Activated CD4-positive, alpha-beta T cell treated with anti-CD3 and anti-CD28 coated beads, Interleukin-2, amount 10 ng/mL, durations not matched to agents 24 days and 14 days (primary cell): ENCODE measurements at regions of chr4 and their contacts with region 1.

Region 1: GRCh38 chr4:113684534-113685091 is 76.9 kb downstream of the CAMK2D start:
- DNase-seq: peak; percentile 71
- H3K4me3 Mint-ChIP-seq: peak overlapping the region; percentile 69
- H3K27ac Mint-ChIP-seq: peak overlapping the region; percentile 95
- H3K4me1 Mint-ChIP-seq: peaks cover 56% of the 10 kb centered on the region
- H3K27me3 Mint-ChIP-seq: no peaks in the 10 kb centered on the region

Region 2: GRCh38 chr4:113355550-113356371 is 328.9 kb before region 1 on chr4:
- intact Hi-C with region 1: loop called (anchors 5 kb)
- DNase-seq: peak; percentile 90
- H3K4me3 Mint-ChIP-seq: peak overlapping the region; percentile 54
- H3K27ac Mint-ChIP-seq: peak overlapping the region; percentile 89
- H3K4me1 Mint-ChIP-seq: peaks cover 20% of the 10 kb centered on the region
- H3K27me3 Mint-ChIP-seq: peaks cover 42% of the 10 kb centered on the region

Region 3: DNA sequence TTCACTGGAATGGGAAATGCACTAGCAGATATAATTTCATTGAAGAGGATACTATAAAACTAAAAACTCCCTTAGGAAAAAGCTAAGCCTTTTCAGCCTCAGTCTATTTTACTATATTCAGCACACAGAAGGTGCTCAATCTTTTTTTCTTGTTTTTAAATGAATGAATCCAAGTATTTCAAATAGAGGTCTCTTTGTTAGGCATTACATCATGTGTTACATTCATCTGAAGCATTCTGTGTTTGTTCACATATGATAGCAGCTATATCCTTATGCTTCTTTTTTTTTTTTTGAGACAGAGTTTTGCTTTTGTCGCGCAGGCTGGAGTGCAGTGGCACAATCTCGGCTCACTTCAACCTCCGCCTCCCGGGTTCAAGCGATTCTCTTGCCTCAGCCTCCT is 201.5 kb before region 1 on chr4:
- intact Hi-C with region 1: no loop called
- DNase-seq: no peak
- H3K4me3 Mint-ChIP-seq: no peak overlapping the region
- H3K27ac Mint-ChIP-seq: no peak overlapping the region
- H3K4me1 Mint-ChIP-seq: no peaks in the 10 kb centered on the region
- H3K27me3 Mint-ChIP-seq: no peaks in the 10 kb centered on the region

Region 4: DNA sequence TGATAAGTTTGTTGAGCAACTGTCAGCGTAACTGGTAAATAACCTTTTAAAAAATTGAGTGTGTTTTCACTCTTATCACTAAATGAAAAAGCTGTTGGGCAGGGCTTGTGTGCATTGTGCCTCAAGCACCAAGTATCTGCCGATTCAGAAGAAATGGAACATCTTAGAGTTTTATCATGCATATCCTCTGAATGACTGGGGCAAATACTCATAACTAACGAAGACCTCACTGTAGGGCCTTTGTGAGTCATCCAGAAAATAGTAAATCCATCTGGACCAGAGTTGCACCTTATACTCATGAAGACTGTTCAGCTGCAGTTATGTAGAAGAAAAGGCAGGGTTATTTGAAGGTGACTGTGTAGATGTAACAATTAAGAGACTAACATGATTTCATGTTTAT is 145.2 kb before region 1 on chr4:
- intact Hi-C with region 1: loop called (anchors 1 kb)
- DNase-seq: no peak
- H3K4me3 Mint-ChIP-seq: peak overlapping the region; percentile 9
- H3K27ac Mint-ChIP-seq: peak overlapping the region; percentile 79
- H3K4me1 Mint-ChIP-seq: peaks cover 30% of the 10 kb centered on the region
- H3K27me3 Mint-ChIP-seq: no peaks in the 10 kb centered on the region

Region 5: GRCh38 chr4:113636438-113636818 is 48.2 kb before region 1 on chr4:
- intact Hi-C with region 1: loop called (anchors 1 kb)
- DNase-seq: peak; percentile 71
- H3K4me3 Mint-ChIP-seq: peak overlapping the region; percentile 69
- H3K27ac Mint-ChIP-seq: peak overlapping the region; percentile 73
- H3K4me1 Mint-ChIP-seq: peaks cover 48% of the 10 kb centered on the region
- H3K27me3 Mint-ChIP-seq: no peaks in the 10 kb centered on the region

Region 6: GRCh38 chr4:113756005-113756410 is 71.4 kb after region 1 on chr4:
- intact Hi-C with region 1: loop called (anchors 1 kb)
- DNase-seq: no peak
- H3K4me3 Mint-ChIP-seq: peak overlapping the region; percentile 68
- H3K27ac Mint-ChIP-seq: peak overlapping the region; percentile 80
- H3K4me1 Mint-ChIP-seq: peaks cover 43% of the 10 kb centered on the region
- H3K27me3 Mint-ChIP-seq: no peaks in the 10 kb centered on the region

Region 7: DNA sequence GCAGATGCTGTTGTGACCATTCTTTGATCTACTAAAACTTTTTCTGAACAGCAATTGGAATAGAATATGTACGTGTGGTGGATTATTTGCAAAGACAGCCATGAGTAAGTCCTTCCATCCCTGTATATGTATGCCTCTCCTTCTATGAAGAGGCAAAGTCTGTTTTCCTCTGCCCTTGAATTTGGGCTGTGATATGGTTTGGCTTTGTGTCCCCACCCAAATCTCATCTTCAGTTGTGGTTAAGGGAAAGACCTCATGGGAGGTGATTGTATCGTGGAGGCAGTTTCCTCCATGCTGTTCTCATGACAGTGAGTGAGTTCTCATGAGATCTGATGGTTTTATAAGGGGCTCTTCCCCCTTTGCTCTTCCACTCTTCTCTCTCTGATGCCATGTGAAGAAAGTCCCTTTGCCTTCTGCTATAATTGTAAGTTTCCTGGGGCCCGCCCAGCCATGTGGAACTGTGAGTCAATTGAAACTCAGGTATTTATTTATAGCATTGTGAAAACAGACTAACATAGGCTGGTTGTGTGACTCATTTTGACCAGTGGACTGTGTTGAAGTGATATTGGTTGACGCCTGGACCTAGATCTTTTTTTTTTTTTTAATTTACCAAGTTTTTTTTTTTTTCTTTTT is 185.2 kb after region 1 on chr4:
- intact Hi-C with region 1: loop called (anchors 5 kb)
- DNase-seq: peak; percentile 67
- H3K4me3 Mint-ChIP-seq: no peak overlapping the region
- H3K27ac Mint-ChIP-seq: peak overlapping the region; percentile 90
- H3K4me1 Mint-ChIP-seq: peaks cover 12% of the 10 kb centered on the region
- H3K27me3 Mint-ChIP-seq: no peaks in the 10 kb centered on the region